GM12878 (cell line): ENCODE measurements at regions of chr13 and their contacts with region 1.

Region 1: GRCh38 chr13:71789693-71790329 is 77.2 kb downstream of the DACH1 start:
- DNase-seq: no peak
- ATAC-seq: no peak
- H3K4me3 ChIP-seq: no peak overlapping the region
- H3K27ac ChIP-seq: no peak overlapping the region
- H3K4me1 ChIP-seq: no peaks in the 10 kb centered on the region
- H3K27me3 ChIP-seq: no peaks in the 10 kb centered on the region
- CTCF ChIP-seq: no peak
- EP300 ChIP-seq: no peak
- POLR2A ChIP-seq: no peak
- RAD21 ChIP-seq: no peak

Region 2: DNA sequence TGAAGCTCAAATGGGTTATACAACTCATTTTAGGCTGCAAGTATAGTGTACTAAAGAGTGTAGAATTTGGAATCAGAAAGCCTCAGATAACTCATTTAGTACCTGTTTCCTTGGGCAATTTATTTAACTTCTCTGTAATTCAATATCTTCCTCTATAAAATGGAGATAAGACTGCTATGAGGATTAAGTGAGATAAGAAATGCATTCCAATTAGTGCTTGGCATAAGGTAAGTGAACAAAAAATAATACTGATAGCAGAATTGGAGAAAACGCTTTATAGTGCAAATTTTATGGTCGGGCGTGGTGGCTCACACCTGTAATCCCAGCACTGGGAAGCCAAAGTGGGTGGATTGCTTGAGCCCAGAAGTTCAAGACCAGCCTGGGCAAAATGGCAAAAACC is 52.2 kb after region 1 on chr13:
- CTCF ChIA-PET with region 1: no interaction called
- POLR2A ChIA-PET with region 1: no interaction called
- RAD21 ChIA-PET with region 1: no interaction called
- SMC1A ChIA-PET with region 1: no interaction called
- in situ Hi-C with region 1: no loop called
- intact Hi-C with region 1: loop called (anchors 10 kb)
- DNase-seq: no peak
- ATAC-seq: no peak
- H3K4me3 ChIP-seq: no peak overlapping the region
- H3K27ac ChIP-seq: no peak overlapping the region
- H3K4me1 ChIP-seq: no peaks in the 10 kb centered on the region
- H3K27me3 ChIP-seq: no peaks in the 10 kb centered on the region
- CTCF ChIP-seq: no peak
- EP300 ChIP-seq: no peak
- POLR2A ChIP-seq: no peak
- RAD21 ChIP-seq: no peak